MCF 10A (cell line): ENCODE measurements at regions of chr1 and their contacts with region 1.

Region 1: GRCh38 chr1:226547754-226548191 is 791 bp upstream of the STUM start:
- DNase-seq: peak; percentile 98
- H3K4me3 Mint-ChIP-seq: no peak overlapping the region
- H3K27ac Mint-ChIP-seq: no peak overlapping the region
- H3K4me1 Mint-ChIP-seq: peaks cover 14% of the 10 kb centered on the region
- H3K27me3 Mint-ChIP-seq: peaks cover 51% of the 10 kb centered on the region
- CTCF ChIP-seq: peak; percentile 99

Region 2: GRCh38 chr1:226407497-226408284 is 140.1 kb before region 1 on chr1 and contains the start of gene PARP1:
- CTCF ChIA-PET with region 1: interaction called, 5 read pairs
- POLR2A ChIA-PET with region 1: interaction called, 11 read pairs
- intact Hi-C with region 1: no loop called
- DNase-seq: peak; percentile 98
- H3K4me3 Mint-ChIP-seq: peak within 1 kb of the TSS; percentile 78
- H3K27ac Mint-ChIP-seq: peak within 1 kb of the TSS; percentile 82
- H3K4me1 Mint-ChIP-seq: peaks cover 38% of the 10 kb centered on the region
- H3K27me3 Mint-ChIP-seq: no peaks in the 10 kb centered on the region
- CTCF ChIP-seq: peak; percentile 99
- total RNA-seq, gene PARP1: 192 and 235 TPM in 2 replicates

Region 3: GRCh38 chr1:226526801-226527595 is 20.8 kb before region 1 on chr1:
- CTCF ChIA-PET with region 1: interaction called, 15 read pairs
- POLR2A ChIA-PET with region 1: no interaction called
- intact Hi-C with region 1: no loop called
- DNase-seq: peak; percentile 67
- H3K4me3 Mint-ChIP-seq: no peak overlapping the region
- H3K27ac Mint-ChIP-seq: no peak overlapping the region
- H3K4me1 Mint-ChIP-seq: no peaks in the 10 kb centered on the region
- H3K27me3 Mint-ChIP-seq: peaks cover 24% of the 10 kb centered on the region
- CTCF ChIP-seq: no peak

Region 4: DNA sequence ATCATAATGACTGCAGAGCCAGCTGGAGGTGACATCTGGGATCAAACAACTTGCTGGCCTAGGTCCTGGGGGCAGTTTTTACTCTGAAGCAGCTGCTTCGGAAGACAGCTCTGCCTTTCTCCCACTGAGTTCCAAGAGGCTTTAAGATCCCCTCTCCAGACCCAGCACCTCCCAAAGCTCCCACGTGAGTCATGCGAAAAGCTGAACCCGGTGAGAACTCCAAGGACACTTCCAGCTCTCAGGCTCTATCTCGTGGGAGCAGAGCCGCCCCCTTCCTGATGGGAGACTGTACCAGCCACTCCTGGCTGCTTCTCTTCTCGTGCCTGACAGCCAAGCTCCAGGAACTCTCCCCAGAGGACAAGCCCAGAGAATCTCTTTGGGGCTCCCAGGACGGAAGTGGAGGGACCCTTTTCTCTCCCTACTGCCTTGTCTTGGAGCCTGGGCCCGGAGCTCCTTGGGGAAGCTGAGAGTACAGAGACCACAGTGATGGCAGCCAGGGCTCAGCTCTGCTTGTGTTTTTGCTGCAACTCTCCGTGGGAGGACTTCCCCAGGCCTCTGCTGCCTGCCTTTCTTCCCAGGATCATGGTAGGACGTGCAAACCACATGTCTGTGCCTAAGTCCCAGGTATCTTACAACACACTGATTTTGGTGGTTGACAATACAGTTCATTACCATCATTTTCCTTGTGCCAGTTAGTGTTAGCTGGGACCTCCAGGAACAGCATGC is 41.4 kb after region 1 on chr1:
- CTCF ChIA-PET with region 1: interaction called, 18 read pairs
- POLR2A ChIA-PET with region 1: interaction called, 3 read pairs
- intact Hi-C with region 1: no loop called
- DNase-seq: peak; percentile 32
- H3K4me3 Mint-ChIP-seq: no peak overlapping the region
- H3K27ac Mint-ChIP-seq: no peak overlapping the region
- H3K4me1 Mint-ChIP-seq: peaks cover 1% of the 10 kb centered on the region
- H3K27me3 Mint-ChIP-seq: peaks cover 19% of the 10 kb centered on the region
- CTCF ChIP-seq: no peak

Region 5: GRCh38 chr1:226626577-226626956 is 78.8 kb after region 1 on chr1:
- CTCF ChIA-PET with region 1: interaction called, 17 read pairs
- POLR2A ChIA-PET with region 1: interaction called, 6 read pairs
- intact Hi-C with region 1: loop called (anchors 1 kb)
- DNase-seq: peak; percentile 85
- H3K4me3 Mint-ChIP-seq: no peak overlapping the region
- H3K27ac Mint-ChIP-seq: peak overlapping the region; percentile 36
- H3K4me1 Mint-ChIP-seq: peaks cover 22% of the 10 kb centered on the region
- H3K27me3 Mint-ChIP-seq: no peaks in the 10 kb centered on the region
- CTCF ChIP-seq: peak; percentile 99

Region 6: DNA sequence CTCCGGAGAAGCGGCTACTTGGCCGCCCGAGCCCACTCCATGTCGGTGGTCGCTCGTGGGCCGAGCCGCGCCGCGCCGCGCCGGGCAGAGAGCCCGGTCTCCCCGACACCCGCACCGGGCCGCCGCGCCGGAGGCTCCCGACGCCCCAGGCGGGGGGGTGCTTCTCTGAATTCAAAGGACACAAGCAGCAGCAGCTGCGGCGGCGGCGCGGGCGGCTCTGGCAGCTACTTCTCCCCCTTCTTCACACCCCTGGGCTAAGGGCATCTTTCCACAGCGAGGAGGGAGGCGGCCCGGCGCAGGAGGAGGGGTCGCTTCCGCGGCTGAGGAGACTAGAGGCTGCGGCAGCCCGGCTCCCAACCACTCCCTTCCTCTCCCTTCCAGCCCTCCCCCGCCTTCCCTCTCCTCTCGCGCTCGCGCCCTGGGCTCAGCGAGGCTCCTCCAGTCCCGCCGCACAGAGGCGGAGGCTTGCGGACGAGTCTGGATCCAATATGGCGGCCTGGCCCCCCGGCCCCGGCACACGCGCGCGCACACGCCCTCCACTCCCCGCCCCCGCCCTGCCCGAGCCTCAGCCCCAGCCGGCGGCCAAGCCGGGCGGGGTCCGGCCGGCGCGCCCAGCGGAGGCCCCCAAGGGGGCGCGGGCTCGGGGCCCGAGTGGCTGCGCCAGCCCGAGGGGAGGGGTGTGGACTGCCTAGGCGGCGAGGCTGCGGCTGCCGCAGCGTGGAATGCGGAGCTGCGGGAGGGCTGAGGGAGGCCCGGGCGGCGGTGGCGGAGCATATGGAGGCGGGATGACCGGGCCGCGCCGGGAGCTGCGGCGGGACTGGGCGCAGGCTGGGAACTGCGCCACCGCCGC is 770.5 kb after region 1 on chr1 and contains the start of gene CDC42BPA:
- CTCF ChIA-PET with region 1: no interaction called
- POLR2A ChIA-PET with region 1: interaction called, 3 read pairs
- intact Hi-C with region 1: loop called (anchors 5 kb)
- DNase-seq: peak; percentile 96
- H3K4me3 Mint-ChIP-seq: peak within 1 kb of the TSS; percentile 86
- H3K27ac Mint-ChIP-seq: peak within 1 kb of the TSS; percentile 98
- H3K4me1 Mint-ChIP-seq: peaks cover 26% of the 10 kb centered on the region
- H3K27me3 Mint-ChIP-seq: no peaks in the 10 kb centered on the region
- CTCF ChIP-seq: no peak
- total RNA-seq, gene CDC42BPA: 88.8 and 102 TPM in 2 replicates